GM12878 (cell line): ENCODE measurements at regions of chr19 and their contacts with region 1.

Region 1: DNA sequence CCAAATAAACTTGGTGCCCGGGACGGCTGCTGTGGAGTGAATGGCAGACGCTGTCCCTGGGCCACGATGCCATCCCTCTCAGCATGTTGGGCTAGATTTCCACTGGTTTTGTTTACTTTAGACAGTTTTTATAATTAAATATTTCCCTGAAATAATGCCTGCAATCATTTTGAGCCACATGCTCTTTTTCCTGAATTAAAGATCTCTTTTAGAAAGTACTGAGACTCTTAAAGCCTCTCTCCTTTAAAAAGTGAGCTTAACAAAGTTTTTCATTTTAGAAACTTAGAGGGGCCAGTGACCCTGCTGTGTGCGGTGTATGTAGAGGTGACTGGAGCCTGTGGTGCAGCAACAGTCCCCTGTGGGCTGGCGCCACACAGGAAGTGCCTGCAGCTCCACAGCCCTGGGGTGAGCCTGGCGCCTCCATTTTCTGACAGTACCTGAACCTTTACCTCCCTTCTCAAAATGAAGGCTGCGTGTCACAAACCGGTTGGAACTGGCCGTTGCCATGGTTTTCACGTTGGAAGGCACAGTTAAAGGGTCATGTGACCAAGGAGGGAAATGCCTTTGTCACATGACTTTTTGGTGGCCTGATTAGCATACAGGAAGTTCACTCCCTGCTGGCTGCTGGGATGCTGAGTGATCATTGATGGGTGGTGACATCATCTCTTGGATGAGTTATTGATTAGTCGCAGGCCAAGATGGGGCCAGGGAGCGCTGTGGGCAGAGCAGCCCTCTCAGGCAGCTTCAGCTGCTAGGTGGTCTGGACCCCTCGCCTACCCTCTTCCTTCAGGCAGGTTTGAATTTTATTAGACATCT is 26.3 kb downstream of the TSSK6 start:
- DNase-seq: peak; percentile 73
- ATAC-seq: peak; percentile 84
- H3K4me3 ChIP-seq: no peak overlapping the region
- H3K27ac ChIP-seq: peak overlapping the region; percentile 82
- H3K4me1 ChIP-seq: peaks cover 28% of the 10 kb centered on the region
- H3K27me3 ChIP-seq: no peaks in the 10 kb centered on the region
- CTCF ChIP-seq: no peak
- EP300 ChIP-seq: no peak
- POLR2A ChIP-seq: peak; percentile 70; the same call in 1 of the 2 replicates
- RAD21 ChIP-seq: no peak

Region 2: DNA sequence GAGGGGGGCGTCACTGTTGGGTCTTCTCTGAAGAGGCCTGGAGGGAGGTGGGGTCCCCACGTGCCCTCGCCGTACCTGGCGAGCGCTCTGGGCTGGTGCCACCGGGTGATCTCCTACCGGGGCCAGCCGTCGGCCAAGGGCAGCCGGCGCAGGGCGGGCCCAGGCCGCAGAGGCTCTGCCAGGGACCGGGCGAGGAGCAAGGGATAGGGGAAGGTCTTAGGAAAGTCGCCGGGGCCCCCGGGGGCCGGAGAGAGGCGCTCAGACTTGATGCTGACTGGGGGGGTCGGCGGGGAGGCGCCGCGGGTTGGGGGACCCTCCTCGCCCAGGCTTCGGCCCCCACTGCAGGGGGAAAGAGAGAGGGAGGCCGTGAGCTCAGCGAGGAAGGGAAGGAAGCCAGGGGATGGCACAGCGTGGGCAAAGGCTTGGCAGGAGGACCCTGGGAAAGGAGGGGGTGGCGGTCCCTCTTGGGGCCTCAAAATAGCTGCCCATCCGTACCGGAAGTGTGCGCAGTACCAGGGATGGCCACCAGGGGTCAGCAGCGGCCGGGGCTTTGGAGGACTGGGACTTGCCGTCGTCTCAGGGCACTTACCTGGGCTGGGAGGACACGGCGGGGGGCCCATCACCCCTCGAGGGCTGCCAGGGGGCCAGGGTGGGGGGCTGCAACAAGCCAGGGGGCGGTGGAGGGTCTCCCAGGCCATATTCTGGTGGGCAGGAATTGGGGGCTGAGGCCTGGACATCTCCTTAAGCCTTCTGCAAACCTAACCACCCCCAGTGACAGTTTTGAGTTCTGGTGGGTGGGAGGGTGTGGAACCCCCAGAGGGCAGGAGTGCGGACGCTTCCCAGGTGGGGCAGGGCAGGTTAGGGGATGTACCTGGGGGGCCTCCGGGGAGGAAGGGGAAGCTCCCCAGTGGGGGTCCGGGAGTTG is 343.1 kb before region 1 on chr19:
- CTCF ChIA-PET with region 1: interaction called, 5 read pairs
- POLR2A ChIA-PET with region 1: no interaction called
- RAD21 ChIA-PET with region 1: interaction called, 5 read pairs
- SMC1A ChIA-PET with region 1: no interaction called
- in situ Hi-C with region 1: loop called (anchors 10 kb)
- intact Hi-C with region 1: loop called (anchors 1 kb)
- DNase-seq: no peak
- ATAC-seq: peak; percentile 97
- H3K4me3 ChIP-seq: no peak overlapping the region
- H3K27ac ChIP-seq: no peak overlapping the region
- H3K4me1 ChIP-seq: 0 out of 2 replicates have a peak, but pooled peaks cover 3% of the 10 kb centered on the region
- H3K27me3 ChIP-seq: no peaks in the 10 kb centered on the region
- CTCF ChIP-seq: peak; percentile 89 to 98 (median 94)
- EP300 ChIP-seq: no peak
- POLR2A ChIP-seq: peak; percentile 36; the same call in 1 of the 2 replicates
- RAD21 ChIP-seq: peak; percentile 98

Region 3: GRCh38 chr19:19361075-19361594 is 127.9 kb before region 1 on chr19:
- CTCF ChIA-PET with region 1: interaction called, 223 read pairs
- POLR2A ChIA-PET with region 1: interaction called, 16 read pairs
- RAD21 ChIA-PET with region 1: interaction called, 72 read pairs
- SMC1A ChIA-PET with region 1: interaction called, 97 read pairs
- in situ Hi-C with region 1: loop called (anchors 5 kb)
- intact Hi-C with region 1: loop called (anchors 1 kb)
- DNase-seq: peak; percentile 73
- ATAC-seq: peak; percentile 90
- H3K4me3 ChIP-seq: no peak overlapping the region
- H3K27ac ChIP-seq: no peak overlapping the region; the same call in 1 of the 2 replicates
- H3K4me1 ChIP-seq: 0 out of 2 replicates have a peak, but pooled peaks cover 2% of the 10 kb centered on the region
- H3K27me3 ChIP-seq: no peaks in the 10 kb centered on the region
- CTCF ChIP-seq: peak; percentile 70 to 84 (median 77)
- EP300 ChIP-seq: no peak
- POLR2A ChIP-seq: no peak
- RAD21 ChIP-seq: 0 out of 2 replicates have a peak, but pooled peaks have one; percentile 34

Region 4: GRCh38 chr19:19372656-19373416 is 116.2 kb before region 1 on chr19:
- CTCF ChIA-PET with region 1: interaction called, 223 read pairs
- POLR2A ChIA-PET with region 1: interaction called, 6 read pairs
- RAD21 ChIA-PET with region 1: interaction called, 72 read pairs
- SMC1A ChIA-PET with region 1: interaction called, 97 read pairs
- in situ Hi-C with region 1: loop called (anchors 5 kb)
- intact Hi-C with region 1: no loop called
- DNase-seq: no peak
- ATAC-seq: peak; percentile 99
- H3K4me3 ChIP-seq: no peak overlapping the region
- H3K27ac ChIP-seq: peak overlapping the region; percentile 51
- H3K4me1 ChIP-seq: peaks cover 5% of the 10 kb centered on the region
- H3K27me3 ChIP-seq: no peaks in the 10 kb centered on the region
- CTCF ChIP-seq: no peak
- EP300 ChIP-seq: no peak
- POLR2A ChIP-seq: peak; percentile 37; the same call in 1 of the 2 replicates
- RAD21 ChIP-seq: no peak

Region 5: DNA sequence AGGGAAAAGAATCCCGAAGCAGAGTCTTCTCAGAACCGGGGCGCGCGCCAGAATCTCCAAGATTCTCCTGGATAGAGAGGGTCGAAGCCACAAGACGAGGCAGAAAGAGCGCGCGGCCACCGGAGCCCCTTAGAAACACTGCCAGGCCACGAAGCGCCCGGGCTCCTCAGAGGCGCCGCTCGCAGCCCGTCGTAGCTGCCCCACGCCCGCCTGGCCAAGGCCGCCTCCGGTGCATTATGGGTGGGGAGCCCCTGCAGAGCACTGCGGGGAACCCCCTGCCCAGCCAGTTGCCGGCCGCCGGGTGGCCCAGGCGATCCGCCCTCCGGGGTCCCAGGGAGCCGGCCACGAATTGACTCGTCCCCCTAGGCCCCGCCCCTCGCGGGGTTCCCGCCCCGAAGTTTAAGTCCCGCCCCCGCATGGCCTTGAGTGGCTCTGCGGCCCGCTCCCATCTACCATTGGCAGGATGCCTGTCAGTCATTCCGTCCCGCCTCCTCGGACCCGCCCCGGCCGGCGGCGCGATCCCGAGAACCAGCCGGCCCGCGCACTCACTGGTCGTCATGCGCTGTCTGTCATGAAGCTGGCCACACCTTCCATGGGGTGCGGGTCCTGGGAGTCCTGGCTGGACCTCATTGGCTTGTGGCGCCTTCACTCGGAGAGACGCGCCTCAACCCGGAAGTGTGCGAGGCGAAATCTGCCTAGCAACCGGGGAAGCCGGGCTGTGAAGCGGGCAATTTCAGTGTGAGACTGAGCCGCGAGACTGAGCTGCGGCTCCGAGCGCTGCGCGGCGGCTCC is 103.8 kb before region 1 on chr19:
- CTCF ChIA-PET with region 1: interaction called, 24 read pairs
- POLR2A ChIA-PET with region 1: no interaction called
- RAD21 ChIA-PET with region 1: interaction called, 23 read pairs
- SMC1A ChIA-PET with region 1: interaction called, 10 read pairs
- in situ Hi-C with region 1: no loop called
- intact Hi-C with region 1: loop called (anchors 1 kb)
- DNase-seq: peak; percentile 99
- ATAC-seq: peak; percentile 95
- H3K4me3 ChIP-seq: peak overlapping the region; percentile 69
- H3K27ac ChIP-seq: peak overlapping the region; percentile 89
- H3K4me1 ChIP-seq: peaks cover 19% of the 10 kb centered on the region
- H3K27me3 ChIP-seq: no peaks in the 10 kb centered on the region
- CTCF ChIP-seq: peak; percentile 9 to 52 (median 27); a peak in 4 of 6 replicates
- EP300 ChIP-seq: no peak
- POLR2A ChIP-seq: peak; percentile 80
- RAD21 ChIP-seq: peak; percentile 51

Region 6: DNA sequence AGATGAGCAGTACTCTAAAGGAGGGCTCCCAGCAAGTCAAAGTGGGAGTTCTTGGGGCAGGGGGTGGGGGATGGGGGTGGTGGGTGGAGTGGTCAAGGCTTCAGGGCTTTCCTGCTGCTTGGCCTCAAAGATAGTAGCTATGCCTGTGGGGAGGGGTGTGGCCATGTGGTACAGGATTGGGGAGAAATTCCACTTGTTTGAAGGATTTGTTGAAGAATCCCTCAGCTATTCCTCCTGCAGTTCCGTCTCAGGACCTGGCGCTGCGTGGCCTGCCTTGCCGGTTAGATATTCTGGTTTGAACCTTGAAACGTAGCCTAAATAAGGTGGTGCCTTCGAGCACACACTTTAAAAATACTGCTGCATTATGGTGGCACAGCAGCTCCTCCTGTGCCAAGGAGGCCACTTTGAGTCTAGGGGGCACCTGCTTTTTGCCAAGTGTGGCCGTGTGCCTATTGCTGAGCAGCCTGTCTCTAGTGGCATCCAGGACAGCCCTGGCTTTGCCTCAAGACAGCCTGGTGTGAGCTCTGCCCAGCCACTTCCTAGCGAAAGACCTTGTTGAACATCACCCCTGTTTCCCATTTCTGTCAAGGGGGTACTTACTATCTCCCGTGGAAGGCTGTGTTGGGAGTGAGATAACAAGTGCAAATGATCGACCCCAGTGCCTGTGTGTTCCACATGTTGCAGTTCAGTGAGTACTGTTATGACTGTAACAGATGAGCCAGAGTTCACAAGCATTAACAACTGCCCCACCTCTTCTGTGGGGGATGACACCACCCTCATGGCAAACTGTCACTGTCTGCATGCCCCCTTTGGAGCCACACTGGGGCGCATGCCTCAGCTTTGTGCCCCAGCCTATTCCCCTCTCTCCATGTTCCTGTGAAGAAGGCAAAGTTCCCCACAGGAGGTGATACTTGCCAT is 78.5 kb before region 1 on chr19:
- CTCF ChIA-PET with region 1: interaction called, 83 read pairs
- POLR2A ChIA-PET with region 1: no interaction called
- RAD21 ChIA-PET with region 1: interaction called, 55 read pairs
- SMC1A ChIA-PET with region 1: interaction called, 57 read pairs
- in situ Hi-C with region 1: no loop called
- intact Hi-C with region 1: no loop called
- DNase-seq: no peak
- ATAC-seq: peak; percentile 73
- H3K4me3 ChIP-seq: no peak overlapping the region
- H3K27ac ChIP-seq: peak overlapping the region; percentile 7; the same call in 1 of the 2 replicates
- H3K4me1 ChIP-seq: peaks cover 26% of the 10 kb centered on the region
- H3K27me3 ChIP-seq: no peaks in the 10 kb centered on the region
- CTCF ChIP-seq: peak; percentile 10 to 43 (median 23); a peak in 1 of 6 replicates
- EP300 ChIP-seq: peak in 1 of 2 experiments; percentile 46; a peak in 1 of 4 replicates
- POLR2A ChIP-seq: peak; percentile 16; the same call in 1 of the 2 replicates
- RAD21 ChIP-seq: 0 out of 2 replicates have a peak, but pooled peaks have one; percentile 26

Region 7: DNA sequence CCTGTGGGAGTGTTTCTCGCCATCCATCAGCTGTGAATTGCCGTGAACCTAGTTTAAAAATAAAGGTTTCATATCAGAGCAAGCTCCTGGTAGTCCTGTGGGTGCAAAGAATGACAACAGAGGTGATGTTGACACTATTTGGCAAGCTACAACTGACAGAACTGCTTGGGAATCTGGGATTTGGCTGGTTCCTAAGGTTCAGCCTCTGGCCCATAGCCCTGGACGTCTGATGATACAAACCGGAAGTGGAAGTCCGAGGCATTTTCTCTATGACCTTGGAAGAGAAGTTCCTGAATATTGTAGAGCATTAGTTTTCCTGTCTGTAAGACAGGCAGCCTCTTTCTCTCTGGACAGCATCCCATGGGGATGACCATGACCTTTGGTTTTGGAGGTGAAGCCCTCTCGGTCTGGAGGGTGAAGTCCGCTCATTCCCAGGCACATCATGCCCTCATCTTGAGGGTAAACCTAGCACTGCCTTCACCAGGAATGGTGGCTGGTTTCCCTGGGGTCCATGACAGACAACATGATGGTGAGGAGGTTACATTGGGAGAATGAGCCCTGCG is 54.5 kb before region 1 on chr19:
- CTCF ChIA-PET with region 1: no interaction called
- POLR2A ChIA-PET with region 1: no interaction called
- RAD21 ChIA-PET with region 1: no interaction called
- SMC1A ChIA-PET with region 1: no interaction called
- in situ Hi-C with region 1: no loop called
- intact Hi-C with region 1: no loop called
- DNase-seq: no peak
- ATAC-seq: no peak
- H3K4me3 ChIP-seq: no peak overlapping the region
- H3K27ac ChIP-seq: no peak overlapping the region
- H3K4me1 ChIP-seq: peaks cover 4% of the 10 kb centered on the region
- H3K27me3 ChIP-seq: no peaks in the 10 kb centered on the region
- CTCF ChIP-seq: no peak
- EP300 ChIP-seq: no peak
- POLR2A ChIP-seq: no peak
- RAD21 ChIP-seq: no peak

Region 8: DNA sequence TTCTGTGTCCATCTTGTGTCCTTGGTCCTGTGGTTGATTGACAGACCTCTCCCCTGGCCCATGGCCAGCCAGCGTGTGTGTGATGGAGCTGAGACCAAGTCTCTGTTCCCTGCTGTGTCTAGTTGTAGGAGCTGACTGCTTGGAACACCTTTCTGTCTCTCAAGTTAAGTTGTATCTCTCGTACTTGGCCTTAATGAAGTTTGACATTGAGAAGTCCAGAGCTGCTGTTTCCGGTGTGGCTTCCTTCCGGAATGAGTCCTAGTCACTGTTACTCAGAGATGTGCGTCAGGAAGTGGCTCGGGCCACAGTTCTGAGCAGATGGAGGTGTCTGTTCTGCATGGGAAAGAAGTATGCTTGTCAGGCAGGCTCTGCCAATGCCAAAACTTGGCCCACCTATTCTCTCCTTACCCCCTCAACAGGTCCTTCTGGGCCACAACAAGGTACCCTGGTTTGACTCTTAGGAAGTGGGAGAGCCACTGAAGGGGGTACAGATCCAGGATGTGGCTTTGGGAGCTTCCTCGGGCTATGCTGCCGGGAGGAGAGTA is 29.3 kb before region 1 on chr19:
- CTCF ChIA-PET with region 1: interaction called, 10 read pairs
- POLR2A ChIA-PET with region 1: no interaction called
- RAD21 ChIA-PET with region 1: interaction called, 3 read pairs
- SMC1A ChIA-PET with region 1: no interaction called
- in situ Hi-C with region 1: no loop called
- intact Hi-C with region 1: no loop called
- DNase-seq: no peak
- ATAC-seq: peak; percentile 75
- H3K4me3 ChIP-seq: peak overlapping the region; percentile 29; the same call in 1 of the 2 replicates
- H3K27ac ChIP-seq: peak overlapping the region; percentile 79
- H3K4me1 ChIP-seq: peaks cover 54% of the 10 kb centered on the region
- H3K27me3 ChIP-seq: no peaks in the 10 kb centered on the region
- CTCF ChIP-seq: no peak
- EP300 ChIP-seq: no peak
- POLR2A ChIP-seq: no peak; the same call in 1 of the 2 replicates
- RAD21 ChIP-seq: no peak

Region 9: GRCh38 chr19:19540715-19541440 is 51.8 kb after region 1 on chr19:
- CTCF ChIA-PET with region 1: no interaction called
- POLR2A ChIA-PET with region 1: no interaction called
- RAD21 ChIA-PET with region 1: no interaction called
- SMC1A ChIA-PET with region 1: no interaction called
- in situ Hi-C with region 1: no loop called
- intact Hi-C with region 1: no loop called
- DNase-seq: no peak
- ATAC-seq: peak; percentile 83
- H3K4me3 ChIP-seq: peak overlapping the region; percentile 46
- H3K27ac ChIP-seq: no peak overlapping the region
- H3K4me1 ChIP-seq: peaks cover 3% of the 10 kb centered on the region
- H3K27me3 ChIP-seq: peaks cover 0 to 3% of the 10 kb centered on the region in 2 experiments; a peak in 1 of 4 replicates
- CTCF ChIP-seq: no peak
- EP300 ChIP-seq: no peak
- POLR2A ChIP-seq: no peak
- RAD21 ChIP-seq: no peak

Region 10: DNA sequence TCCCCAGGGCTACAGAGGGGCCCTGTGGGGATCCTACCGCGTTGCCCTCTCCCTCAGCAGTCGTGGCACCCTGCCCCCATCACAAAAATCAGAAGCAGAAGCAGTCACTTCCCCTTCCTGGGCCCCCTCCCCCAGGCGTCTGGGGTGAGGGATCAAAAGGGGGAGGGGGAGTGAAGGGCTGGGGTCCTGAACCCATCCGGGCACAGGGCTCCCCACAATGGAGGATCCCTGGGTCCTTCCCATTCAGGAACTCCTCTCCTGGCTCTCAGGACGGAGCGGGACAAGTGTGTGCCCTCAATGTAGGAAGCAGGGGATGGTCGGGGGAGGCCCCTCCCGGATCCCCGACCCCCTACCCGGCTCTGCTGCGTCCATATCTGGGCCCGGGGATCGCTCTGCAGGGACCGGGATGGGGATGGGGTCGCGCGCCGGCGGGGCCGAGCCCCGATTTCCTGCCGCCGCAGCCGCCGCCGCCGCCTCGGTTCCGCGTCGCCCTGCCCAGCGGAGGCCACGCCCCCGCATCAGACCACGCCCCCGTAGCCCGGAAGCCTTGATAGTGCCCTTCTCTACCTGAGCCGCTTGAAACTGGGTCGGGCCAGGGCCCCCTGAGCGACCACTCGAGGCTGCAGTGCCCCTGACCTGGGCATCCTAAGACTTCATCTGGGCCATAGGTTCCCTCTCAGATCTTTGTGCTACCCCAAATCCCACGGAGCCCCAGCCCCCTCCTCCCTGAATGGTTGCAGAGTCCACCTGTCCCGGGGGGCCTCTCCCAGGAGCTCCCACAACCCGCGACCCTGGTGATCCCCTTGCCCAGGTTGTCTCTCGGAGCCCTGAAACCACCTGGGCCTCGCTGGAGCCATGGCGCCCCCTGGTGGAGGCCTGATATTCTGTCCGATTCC is 154.3 kb after region 1 on chr19 and contains the start of gene GMIP:
- CTCF ChIA-PET with region 1: no interaction called
- POLR2A ChIA-PET with region 1: no interaction called
- RAD21 ChIA-PET with region 1: no interaction called
- SMC1A ChIA-PET with region 1: no interaction called
- in situ Hi-C with region 1: no loop called
- intact Hi-C with region 1: no loop called
- DNase-seq: no peak
- ATAC-seq: peak; percentile 94
- H3K4me3 ChIP-seq: peak within 1 kb of the TSS; percentile 96
- H3K27ac ChIP-seq: peak within 1 kb of the TSS; percentile 99
- H3K4me1 ChIP-seq: peaks cover 4% of the 10 kb centered on the region
- H3K27me3 ChIP-seq: no peaks in the 10 kb centered on the region
- CTCF ChIP-seq: peak; percentile 78 to 90 (median 81)
- EP300 ChIP-seq: no peak
- POLR2A ChIP-seq: peak; percentile 78
- RAD21 ChIP-seq: peak; percentile 90
- polyA plus RNA-seq, gene GMIP: 1.5 to 2.8 TPM

Region 11: GRCh38 chr19:19711934-19712828 is 223.1 kb after region 1 on chr19:
- CTCF ChIA-PET with region 1: no interaction called
- POLR2A ChIA-PET with region 1: no interaction called
- RAD21 ChIA-PET with region 1: no interaction called
- SMC1A ChIA-PET with region 1: no interaction called
- in situ Hi-C with region 1: no loop called
- intact Hi-C with region 1: no loop called
- DNase-seq: no peak
- ATAC-seq: no peak
- H3K4me3 ChIP-seq: no peak overlapping the region
- H3K27ac ChIP-seq: no peak overlapping the region
- H3K4me1 ChIP-seq: no peaks in the 10 kb centered on the region
- H3K27me3 ChIP-seq: no peaks in the 10 kb centered on the region
- CTCF ChIP-seq: no peak
- EP300 ChIP-seq: no peak
- POLR2A ChIP-seq: no peak
- RAD21 ChIP-seq: no peak